MCF 10A (cell line): ENCODE measurements at regions of chr18 and their contacts with region 1.

Region 1: DNA sequence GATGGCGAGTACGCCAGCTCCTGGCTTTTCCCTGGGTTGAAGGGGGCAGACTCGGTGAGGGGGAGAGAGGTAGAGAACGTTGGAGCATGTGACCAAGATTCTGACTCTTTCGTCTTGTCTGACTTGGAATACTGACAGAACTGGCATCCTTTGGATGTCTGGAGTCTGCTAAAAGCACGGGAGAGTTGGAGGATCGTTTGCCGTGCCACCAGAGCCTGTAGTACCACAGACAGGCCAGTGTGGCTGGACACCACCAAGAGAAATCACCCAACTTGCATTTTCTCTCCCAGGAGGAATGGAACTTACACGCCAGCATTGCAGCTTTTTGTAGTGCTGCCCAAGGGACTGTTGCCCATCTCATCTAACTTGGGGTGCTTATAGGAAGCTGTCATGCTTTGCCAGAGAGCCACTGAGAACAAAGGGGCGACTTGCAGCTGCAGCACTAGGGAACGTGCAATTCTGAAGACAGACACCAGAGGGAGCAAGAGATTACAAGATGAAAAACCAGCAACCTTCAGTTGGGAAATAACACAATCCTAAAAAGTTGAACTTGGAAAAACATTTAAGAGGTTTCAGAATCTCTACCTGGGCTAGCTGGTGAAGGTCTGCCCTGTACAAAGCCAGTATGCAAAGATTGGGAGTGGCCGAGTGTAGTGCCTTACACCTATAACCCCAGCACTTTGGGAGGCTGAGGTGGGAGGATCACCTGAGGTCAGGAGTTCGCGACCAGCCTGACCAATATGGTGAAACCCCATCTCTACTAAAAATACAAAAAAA is 24.1 kb downstream of the PSMG2 start:
- DNase-seq: peak; percentile 67
- H3K4me3 Mint-ChIP-seq: no peak overlapping the region
- H3K27ac Mint-ChIP-seq: no peak overlapping the region
- H3K4me1 Mint-ChIP-seq: peaks cover 7% of the 10 kb centered on the region
- H3K27me3 Mint-ChIP-seq: no peaks in the 10 kb centered on the region
- CTCF ChIP-seq: peak; percentile 87

Region 2: GRCh38 chr18:12507007-12507406 is 220.0 kb before region 1 on chr18:
- CTCF ChIA-PET with region 1: no interaction called
- POLR2A ChIA-PET with region 1: no interaction called
- intact Hi-C with region 1: no loop called
- DNase-seq: no peak
- H3K4me3 Mint-ChIP-seq: no peak overlapping the region
- H3K27ac Mint-ChIP-seq: no peak overlapping the region
- H3K4me1 Mint-ChIP-seq: no peaks in the 10 kb centered on the region
- H3K27me3 Mint-ChIP-seq: no peaks in the 10 kb centered on the region
- CTCF ChIP-seq: no peak

Region 3: GRCh38 chr18:12711446-12711845 is 15.5 kb before region 1 on chr18:
- CTCF ChIA-PET with region 1: interaction called, 11 read pairs
- POLR2A ChIA-PET with region 1: no interaction called
- intact Hi-C with region 1: no loop called
- DNase-seq: no peak
- H3K4me3 Mint-ChIP-seq: no peak overlapping the region
- H3K27ac Mint-ChIP-seq: no peak overlapping the region
- H3K4me1 Mint-ChIP-seq: no peaks in the 10 kb centered on the region
- H3K27me3 Mint-ChIP-seq: no peaks in the 10 kb centered on the region
- CTCF ChIP-seq: no peak

Region 4: GRCh38 chr18:12737243-12737902 is 10.4 kb after region 1 on chr18:
- CTCF ChIA-PET with region 1: interaction called, 38 read pairs
- POLR2A ChIA-PET with region 1: interaction called, 12 read pairs
- intact Hi-C with region 1: no loop called
- DNase-seq: no peak
- H3K4me3 Mint-ChIP-seq: no peak overlapping the region
- H3K27ac Mint-ChIP-seq: no peak overlapping the region
- H3K4me1 Mint-ChIP-seq: peaks cover 11% of the 10 kb centered on the region
- H3K27me3 Mint-ChIP-seq: no peaks in the 10 kb centered on the region
- CTCF ChIP-seq: no peak